Activated CD4-positive, alpha-beta T cell treated with anti-CD3 and anti-CD28 coated beads for 36 hours (primary cell): ENCODE measurements at regions of chr9 and their contacts with region 1.

Region 1: GRCh38 chr9:26483991-26484390 is 408.6 kb downstream of the CAAP1 start:
- DNase-seq: no peak
- ATAC-seq: no peak
- H3K4me3 Mint-ChIP-seq: no peak overlapping the region
- H3K27ac Mint-ChIP-seq: no peak overlapping the region
- H3K4me1 Mint-ChIP-seq: no peaks in the 10 kb centered on the region
- H3K27me3 Mint-ChIP-seq: no peaks in the 10 kb centered on the region

Region 2: GRCh38 chr9:26426551-26427131 is 57.4 kb before region 1 on chr9:
- CTCF ChIA-PET with region 1: no interaction called
- POLR2A ChIA-PET with region 1: no interaction called
- intact Hi-C with region 1: loop called in 1 of 2 experiments (anchors 10 kb)
- DNase-seq: no peak
- ATAC-seq: no peak
- H3K4me3 Mint-ChIP-seq: no peak overlapping the region
- H3K27ac Mint-ChIP-seq: no peak overlapping the region
- H3K4me1 Mint-ChIP-seq: no peaks in the 10 kb centered on the region
- H3K27me3 Mint-ChIP-seq: no peaks in the 10 kb centered on the region

Region 3: GRCh38 chr9:26457151-26457550 is 26.8 kb before region 1 on chr9:
- CTCF ChIA-PET with region 1: no interaction called
- POLR2A ChIA-PET with region 1: no interaction called
- intact Hi-C with region 1: no loop called
- DNase-seq: no peak
- ATAC-seq: no peak
- H3K4me3 Mint-ChIP-seq: no peak overlapping the region
- H3K27ac Mint-ChIP-seq: no peak overlapping the region
- H3K4me1 Mint-ChIP-seq: no peaks in the 10 kb centered on the region
- H3K27me3 Mint-ChIP-seq: no peaks in the 10 kb centered on the region

Region 4: DNA sequence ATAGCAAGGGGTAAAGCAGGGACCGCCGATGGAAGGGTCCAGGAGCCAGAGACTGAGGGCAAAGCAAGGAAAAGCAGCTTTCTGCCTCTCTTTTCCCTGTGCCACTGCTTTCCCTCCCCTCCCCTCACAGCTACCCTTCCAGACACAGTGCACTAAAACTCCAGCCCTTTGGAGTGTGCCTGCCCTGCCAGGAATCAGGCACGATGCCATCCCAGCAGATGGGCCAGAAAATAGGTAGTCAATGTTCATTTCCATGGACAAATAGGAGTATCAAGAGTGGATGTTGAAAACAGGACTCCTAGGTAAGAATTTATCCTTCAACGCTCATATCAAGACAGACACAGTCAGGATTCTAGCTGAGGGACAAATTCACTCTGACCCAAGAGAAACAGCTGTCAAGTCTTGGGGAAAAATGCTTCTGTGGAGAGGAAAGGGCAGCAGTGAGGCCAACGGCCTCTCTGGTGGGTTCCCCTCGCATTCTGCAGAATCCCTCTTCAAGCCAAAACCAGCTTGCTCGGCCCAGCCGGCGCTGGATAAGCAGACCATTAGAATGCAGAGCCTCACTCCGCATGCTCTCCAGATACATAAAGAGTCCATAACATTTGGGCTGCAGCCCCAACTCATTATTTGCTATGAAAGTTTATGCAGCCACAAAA is 270.6 kb after region 1 on chr9:
- CTCF ChIA-PET with region 1: no interaction called
- POLR2A ChIA-PET with region 1: no interaction called
- intact Hi-C with region 1: no loop called
- DNase-seq: no peak
- ATAC-seq: no peak
- H3K4me3 Mint-ChIP-seq: no peak overlapping the region
- H3K27ac Mint-ChIP-seq: no peak overlapping the region
- H3K4me1 Mint-ChIP-seq: no peaks in the 10 kb centered on the region
- H3K27me3 Mint-ChIP-seq: peaks cover 2% of the 10 kb centered on the region